Left ventricle myocardium superior (tissue), 1 donor: ENCODE measurements at regions of chr5 and their contacts with region 1.

Region 1: DNA sequence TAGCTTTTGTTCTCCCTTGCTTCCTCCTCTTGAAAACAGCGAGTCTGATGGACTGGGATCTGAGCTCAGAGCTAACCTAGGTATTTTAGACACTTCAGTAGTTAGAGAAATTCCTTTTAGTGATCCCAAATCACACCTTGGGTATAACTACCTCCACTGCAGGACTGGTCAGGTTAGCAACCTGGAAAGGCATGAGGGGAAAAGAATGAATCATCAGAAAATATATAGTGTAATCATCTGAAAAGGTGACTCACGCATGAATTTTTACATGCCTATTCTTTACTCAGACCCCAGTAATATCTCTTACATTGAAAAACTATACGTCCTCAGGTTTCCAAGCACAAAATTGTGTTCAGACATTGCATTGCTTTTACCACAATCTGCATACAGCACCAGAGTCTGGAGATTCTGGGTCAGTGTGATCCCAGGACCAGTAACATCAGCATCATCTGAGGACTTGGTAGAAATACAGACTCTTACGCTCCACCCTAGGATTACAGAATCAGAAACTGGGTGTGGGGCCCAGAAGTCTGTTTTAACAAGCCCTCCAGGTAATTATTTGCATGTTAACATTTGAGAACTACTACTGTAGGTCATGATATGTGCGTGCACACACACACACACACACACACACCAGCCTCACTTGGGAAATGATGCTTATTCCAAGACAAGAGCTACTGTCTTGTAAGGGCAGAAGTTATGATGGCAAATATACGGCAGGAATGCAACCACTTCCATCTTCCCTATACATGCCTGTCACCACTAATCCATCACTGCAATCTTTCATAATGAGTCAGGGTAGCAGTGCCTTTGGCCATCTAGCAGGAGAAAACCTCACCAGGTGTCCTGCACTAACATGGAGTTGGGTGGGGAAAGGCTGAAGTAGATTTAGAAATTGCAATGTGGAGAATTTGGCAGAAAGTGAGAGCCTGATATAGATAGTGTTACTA is 271.6 kb upstream of the MAP3K1 start:
- DNase-seq: no peak
- ATAC-seq: no peak

Region 2: GRCh38 chr5:55982957-55983381 is 560.7 kb before region 1 on chr5:
- intact Hi-C with region 1: loop called (anchors 5 kb)
- DNase-seq: no peak
- ATAC-seq: peak; percentile 55

Region 3: DNA sequence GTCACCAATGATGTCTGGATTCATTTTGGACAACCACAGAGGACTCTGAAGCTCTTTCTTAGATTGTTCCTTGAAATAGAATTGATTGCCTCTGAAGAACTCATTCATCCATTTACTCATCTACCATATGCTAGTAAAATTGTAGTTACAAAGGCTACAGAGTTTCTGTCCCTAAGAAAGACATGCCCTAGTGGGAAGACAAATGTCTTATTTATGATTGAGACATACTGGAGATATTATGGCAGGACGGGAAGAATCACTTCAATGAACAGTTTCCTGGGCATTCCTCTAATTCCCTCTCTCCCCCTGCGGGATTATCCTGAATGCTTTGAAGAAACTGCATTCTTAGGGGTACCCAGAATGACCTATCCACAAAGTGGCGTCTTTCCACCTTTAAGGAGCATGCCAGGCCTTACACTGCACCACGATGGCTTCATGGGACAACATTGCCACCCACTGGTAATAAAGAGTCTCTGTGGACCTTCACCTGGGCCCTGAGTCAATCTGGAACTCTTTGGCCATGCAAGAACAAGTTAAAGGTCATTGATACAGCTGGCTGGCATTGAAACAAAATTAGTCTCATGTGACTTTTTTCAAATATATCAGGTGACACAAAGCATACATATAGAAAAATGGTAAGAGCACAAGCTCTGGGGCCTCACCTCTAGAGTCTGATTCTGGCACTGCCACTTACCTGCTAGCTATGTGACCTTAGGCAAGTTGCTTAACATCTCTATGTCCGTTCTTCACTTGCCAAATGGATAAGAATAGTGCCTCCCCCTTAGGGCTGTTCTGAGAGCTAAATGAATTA is 342.7 kb before region 1 on chr5:
- intact Hi-C with region 1: no loop called
- DNase-seq: no peak
- ATAC-seq: peak; percentile 98

Region 4: GRCh38 chr5:56580864-56581263 is 37.1 kb after region 1 on chr5:
- intact Hi-C with region 1: loop called (anchors 2 kb)
- DNase-seq: no peak
- ATAC-seq: no peak